ENCODE measurements at regions of chr3 and their contacts with region 1.

Region 1: DNA sequence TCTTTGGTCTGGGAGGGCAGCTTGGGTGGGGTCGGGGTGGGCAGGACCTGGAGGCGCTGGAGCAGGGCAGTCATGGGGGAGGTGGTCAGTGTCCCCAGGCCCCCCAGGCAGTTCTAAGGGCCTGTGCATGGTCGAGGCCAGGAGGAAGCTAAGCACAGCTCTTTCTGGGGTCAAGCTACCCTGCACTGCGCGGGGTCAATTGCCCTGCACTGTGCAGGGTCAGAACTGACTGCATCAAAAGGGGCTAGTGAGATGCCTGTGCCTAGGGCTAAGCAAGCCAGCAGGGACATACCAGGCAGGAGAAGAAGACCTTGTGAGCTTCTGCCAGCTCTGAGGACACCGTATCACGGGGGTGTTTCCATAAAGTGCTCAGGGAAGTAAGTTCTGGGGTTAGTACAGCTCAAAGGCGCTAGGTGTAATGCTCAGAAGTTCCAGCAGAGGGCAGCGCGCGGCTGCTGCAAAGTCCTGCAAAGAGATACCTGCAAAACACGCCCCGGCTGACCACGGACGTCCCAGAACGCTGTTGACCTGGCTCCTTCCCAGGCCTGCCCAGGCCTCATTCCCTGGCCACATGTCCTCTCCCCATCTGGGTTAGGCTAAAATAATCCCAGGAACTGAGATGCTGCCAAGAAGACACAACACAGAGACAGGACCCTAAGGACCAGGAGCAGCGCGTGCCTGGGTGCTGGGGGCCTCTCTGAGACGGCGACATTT is 18.8 kb upstream of the IQSEC1 start:
- DNase-seq: peak; percentile 98
- H3K4me3 ChIP-seq: peak overlapping the region in 2 of 4 donors; percentile 21 to 24
- H3K27ac ChIP-seq: no peak overlapping the region
- H3K4me1 ChIP-seq: peaks cover 11 to 13% (median 11%) of the 10 kb centered on the region in 4 donors
- H3K27me3 ChIP-seq: no peaks in the 10 kb centered on the region
- CTCF ChIP-seq: peak; percentile 87 to 100 (median 96)
- EP300 ChIP-seq: no peak
- POLR2A ChIP-seq: no peak

Region 2: GRCh38 chr3:13282986-13283876 is 191.2 kb after region 1 on chr3:
- intact Hi-C with region 1: loop called (anchors 5 kb)
- DNase-seq: no peak
- H3K4me3 ChIP-seq: peak overlapping the region; percentile 55 to 65 (median 58)
- H3K27ac ChIP-seq: no peak overlapping the region
- H3K4me1 ChIP-seq: peaks cover 6 to 29% (median 22%) of the 10 kb centered on the region in 4 donors
- H3K27me3 ChIP-seq: peaks cover 0 to 76% (median 20%) of the 10 kb centered on the region in 4 donors
- CTCF ChIP-seq: peak in 1 of 3 experiments; percentile 13
- EP300 ChIP-seq: no peak
- POLR2A ChIP-seq: no peak

Region 3: GRCh38 chr3:13452490-13453335 is 360.7 kb after region 1 on chr3:
- intact Hi-C with region 1: loop called (anchors 2 kb)
- DNase-seq: no peak
- H3K4me3 ChIP-seq: peak overlapping the region; percentile 55 to 66 (median 60)
- H3K27ac ChIP-seq: peak overlapping the region; percentile 77 to 88 (median 83)
- H3K4me1 ChIP-seq: peaks cover 10 to 15% (median 11%) of the 10 kb centered on the region in 4 donors
- H3K27me3 ChIP-seq: no peaks in the 10 kb centered on the region
- CTCF ChIP-seq: peak; percentile 59 to 70 (median 63)
- EP300 ChIP-seq: no peak
- POLR2A ChIP-seq: no peak

Region 4: GRCh38 chr3:13648060-13649001 is 556.3 kb after region 1 on chr3:
- intact Hi-C with region 1: loop called (anchors 5 kb)
- DNase-seq: peak; percentile 93
- H3K4me3 ChIP-seq: peak overlapping the region in 1 of 4 donors; percentile 24
- H3K27ac ChIP-seq: no peak overlapping the region
- H3K4me1 ChIP-seq: peaks cover 15 to 27% (median 25%) of the 10 kb centered on the region in 4 donors
- H3K27me3 ChIP-seq: peaks cover 0 to 27% (median 7%) of the 10 kb centered on the region in 4 donors
- CTCF ChIP-seq: peak in 2 of 3 experiments; percentile 89 to 95
- EP300 ChIP-seq: no peak
- POLR2A ChIP-seq: no peak